Activated T-helper 2 cell treated with anti-CD3 and anti-CD28 coated beads, Interferon-gamma antibody, Interleukin-2, Interleukin-4, amounts not matched to agents 10 μg/mL and 5 μg/mL and 100 μg/mL, durations not matched to agents 14 hours and 24 hours and 36 hours (primary cell): ENCODE measurements at regions of chr1 and their contacts with region 1.

Region 1: GRCh38 chr1:228734881-228735801 is at the start of gene RHOU:
- DNase-seq: peak; percentile 58
- H3K4me3 Mint-ChIP-seq: peak within 1 kb of the TSS; percentile 75
- H3K27ac Mint-ChIP-seq: peak within 1 kb of the TSS; percentile 12
- H3K4me1 Mint-ChIP-seq: peaks cover 5% of the 10 kb centered on the region
- H3K27me3 Mint-ChIP-seq: peaks cover 63% of the 10 kb centered on the region
- total RNA-seq, gene RHOU: 0.18 and 0.28 TPM in 2 replicates

Region 2: DNA sequence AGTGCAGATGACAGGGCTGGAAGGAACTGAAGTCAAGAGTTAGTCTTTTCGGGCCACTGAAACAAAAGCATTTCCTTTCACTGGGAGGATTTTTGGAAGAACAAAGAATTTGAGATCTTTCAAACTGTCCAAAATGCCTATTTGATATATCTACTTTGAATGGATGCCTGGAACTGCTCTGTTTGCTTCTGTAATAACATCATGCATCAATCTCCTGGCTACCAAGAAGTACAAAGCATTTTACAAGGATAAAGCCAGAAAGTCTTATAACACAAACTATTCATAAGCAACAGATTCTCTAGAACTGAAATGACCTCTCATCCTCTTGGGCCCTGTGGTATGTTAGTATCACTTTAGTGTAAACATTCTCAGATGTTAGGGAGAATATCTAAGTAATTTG is 18.1 kb before region 1 on chr1:
- intact Hi-C with region 1: no loop called
- DNase-seq: no peak
- H3K4me3 Mint-ChIP-seq: no peak overlapping the region
- H3K27ac Mint-ChIP-seq: no peak overlapping the region
- H3K4me1 Mint-ChIP-seq: no peaks in the 10 kb centered on the region
- H3K27me3 Mint-ChIP-seq: peaks cover 4% of the 10 kb centered on the region

Region 3: DNA sequence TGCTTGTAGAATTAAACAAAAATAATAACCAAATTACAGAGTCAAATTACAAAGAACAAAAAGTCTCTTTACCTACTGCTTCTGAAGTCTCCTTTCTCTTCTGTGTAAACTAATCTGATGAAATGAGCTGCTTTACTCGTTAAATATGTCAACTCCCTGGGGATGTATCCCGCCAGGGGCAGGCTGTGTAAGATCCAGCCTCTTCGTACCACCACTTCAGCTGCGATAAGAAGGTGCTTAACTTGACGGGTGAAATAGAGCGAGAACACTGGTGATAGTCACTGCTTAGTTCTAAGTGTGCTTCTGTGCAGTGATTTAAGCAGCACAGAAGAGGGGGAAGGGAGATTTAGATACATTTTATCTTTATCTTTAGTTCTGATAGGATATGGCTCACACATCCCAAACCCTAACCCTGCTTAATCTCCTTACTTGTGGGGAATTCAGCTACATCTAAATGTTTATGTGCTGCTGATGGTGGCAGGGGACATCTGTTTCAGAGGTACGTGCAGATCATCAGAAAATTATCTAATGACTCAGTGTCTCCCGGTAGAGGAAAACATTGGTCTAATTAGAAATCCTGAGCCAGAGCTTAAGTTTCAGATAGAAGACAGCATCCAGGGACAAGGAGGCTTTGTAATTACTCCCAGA is 46.1 kb after region 1 on chr1:
- intact Hi-C with region 1: no loop called
- DNase-seq: no peak
- H3K4me3 Mint-ChIP-seq: no peak overlapping the region
- H3K27ac Mint-ChIP-seq: no peak overlapping the region
- H3K4me1 Mint-ChIP-seq: no peaks in the 10 kb centered on the region
- H3K27me3 Mint-ChIP-seq: peaks cover 11% of the 10 kb centered on the region

Region 4: DNA sequence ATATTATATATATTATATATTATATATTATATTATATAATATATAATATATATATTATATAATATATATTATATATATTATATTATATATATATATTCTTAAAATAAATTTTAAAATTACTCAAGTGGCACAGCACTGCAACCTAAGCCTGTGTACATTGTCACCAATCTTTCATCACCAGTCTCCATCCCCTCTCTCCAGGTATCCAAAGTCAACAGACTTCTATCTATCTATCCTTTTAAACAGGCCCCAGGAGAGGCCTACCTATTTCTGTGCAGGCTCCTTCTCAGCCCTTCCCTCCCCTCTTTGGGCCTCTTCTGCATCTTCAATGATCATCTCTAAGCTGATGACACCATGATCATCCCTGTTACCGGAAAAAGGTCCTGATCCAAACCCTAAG is 111.8 kb after region 1 on chr1:
- intact Hi-C with region 1: loop called (anchors 1 kb)
- DNase-seq: no peak
- H3K4me3 Mint-ChIP-seq: no peak overlapping the region
- H3K27ac Mint-ChIP-seq: no peak overlapping the region
- H3K4me1 Mint-ChIP-seq: no peaks in the 10 kb centered on the region
- H3K27me3 Mint-ChIP-seq: peaks cover 11% of the 10 kb centered on the region

Region 5: DNA sequence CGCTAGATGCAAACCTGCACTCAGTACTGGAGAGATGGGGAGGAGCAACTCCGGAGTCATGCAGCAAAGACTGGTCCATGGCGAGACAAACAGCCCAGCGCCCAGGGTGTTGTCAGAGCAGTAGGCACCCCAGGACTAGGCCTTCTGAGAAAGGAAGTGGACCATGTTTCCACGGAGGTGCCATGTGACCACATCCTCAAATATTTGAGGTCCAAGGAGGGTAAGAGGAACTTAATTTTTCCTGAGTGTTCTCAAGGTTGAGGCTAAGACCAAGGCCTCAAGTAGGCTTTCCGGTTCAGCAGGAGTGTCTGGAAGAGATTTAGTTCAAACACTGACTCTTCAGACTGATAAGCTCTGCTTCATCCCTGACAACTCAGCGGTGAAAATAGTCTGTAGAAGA is 186.3 kb after region 1 on chr1:
- intact Hi-C with region 1: loop called (anchors 10 kb)
- DNase-seq: no peak
- H3K4me3 Mint-ChIP-seq: no peak overlapping the region
- H3K27ac Mint-ChIP-seq: no peak overlapping the region
- H3K4me1 Mint-ChIP-seq: no peaks in the 10 kb centered on the region
- H3K27me3 Mint-ChIP-seq: peaks cover 14% of the 10 kb centered on the region

Region 6: DNA sequence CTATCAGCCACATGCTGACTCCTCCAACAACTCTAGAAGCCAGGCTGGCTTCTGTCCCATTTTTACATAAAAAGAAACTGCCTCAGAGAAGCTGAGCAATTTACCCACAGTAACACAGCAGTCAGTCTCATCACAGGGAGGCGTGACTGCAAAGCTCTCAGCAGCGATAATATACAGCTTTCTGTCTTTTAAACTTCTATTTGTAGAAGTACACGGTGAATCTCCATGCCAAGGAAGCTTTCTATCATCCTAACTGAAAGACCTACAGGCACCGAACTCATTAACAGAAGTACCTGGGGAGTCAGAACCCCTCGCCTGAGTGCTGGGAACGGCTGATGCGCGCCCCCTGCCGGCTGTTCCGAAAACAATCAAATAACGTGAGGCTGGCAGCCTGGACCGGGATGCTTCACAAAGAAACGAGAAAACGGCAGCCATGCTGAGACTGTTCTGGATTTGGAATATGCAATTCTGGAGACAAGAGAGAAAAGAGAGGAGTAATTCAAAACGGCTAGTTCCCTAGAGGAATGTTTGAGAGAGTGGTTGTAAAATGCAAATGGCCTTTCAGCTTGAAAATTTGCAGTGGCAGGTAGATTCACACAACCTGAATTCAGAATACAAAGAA is 492.3 kb after region 1 on chr1:
- intact Hi-C with region 1: loop called (anchors 2 kb)
- DNase-seq: peak; percentile 63
- H3K4me3 Mint-ChIP-seq: no peak overlapping the region
- H3K27ac Mint-ChIP-seq: no peak overlapping the region
- H3K4me1 Mint-ChIP-seq: peaks cover 13% of the 10 kb centered on the region
- H3K27me3 Mint-ChIP-seq: peaks cover 29% of the 10 kb centered on the region